Naive thymus-derived CD4-positive, alpha-beta T cell (primary cell): ENCODE measurements at regions of chr7 and their contacts with region 1.

Region 1: DNA sequence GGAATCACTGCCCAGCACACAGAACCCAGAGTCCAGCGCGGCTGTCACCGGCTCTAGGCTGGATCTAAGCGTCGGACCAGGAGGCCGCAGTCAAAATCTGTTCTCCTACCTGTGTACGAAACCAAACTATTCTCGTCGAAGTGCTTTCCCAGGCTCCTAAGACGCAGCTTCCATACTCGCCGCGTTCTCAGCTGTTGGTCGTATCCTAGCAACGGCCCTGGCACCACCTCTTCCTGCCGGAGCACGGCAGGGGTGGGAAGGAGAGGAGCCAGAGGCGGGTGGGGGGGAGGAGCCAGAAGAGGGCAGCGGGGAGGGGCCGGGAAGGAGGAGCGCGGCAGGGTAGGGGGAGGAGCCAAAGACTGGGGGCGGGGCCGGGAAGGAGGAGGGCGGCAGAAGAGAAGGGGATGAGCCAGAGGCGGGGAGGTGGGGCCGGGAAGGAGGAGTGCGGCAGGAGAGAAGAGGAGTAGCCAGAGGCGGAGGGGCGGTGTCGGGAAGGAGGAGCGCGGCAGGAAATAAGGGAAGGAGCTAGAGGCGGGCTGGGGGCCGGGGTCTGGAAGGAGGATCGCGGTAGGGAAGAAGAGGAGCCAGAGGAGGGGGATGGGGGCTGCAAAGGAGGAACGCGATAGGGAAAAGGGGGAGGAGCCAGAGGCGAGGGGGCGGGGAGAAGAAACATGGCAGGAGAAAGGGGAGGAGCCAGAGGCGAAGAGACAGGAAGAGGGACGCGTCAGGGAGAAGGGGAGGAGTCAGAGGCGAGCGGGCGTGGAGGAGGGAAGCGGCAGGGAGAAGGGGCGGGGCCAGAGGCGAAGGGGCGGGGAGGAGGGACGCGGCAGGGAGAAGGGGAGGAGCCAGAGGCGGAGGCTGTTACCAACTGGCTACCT is at the start of gene IQUB:
- DNase-seq: peak; percentile 82 to 94 (median 88)
- ATAC-seq: peak; percentile 95
- H3K4me3 ChIP-seq: peak within 1 kb of the TSS; percentile 54
- H3K4me3 Mint-ChIP-seq: peak within 1 kb of the TSS; percentile 87 to 97 (median 91)
- H3K27ac ChIP-seq: peak within 1 kb of the TSS; percentile 73
- H3K27ac Mint-ChIP-seq: peak within 1 kb of the TSS; percentile 74 to 96 (median 86)
- H3K4me1 ChIP-seq: peaks cover 4 to 14% of the 10 kb centered on the region in 2 donors
- H3K4me1 Mint-ChIP-seq: peaks cover 7 to 31% (median 27%) of the 10 kb centered on the region in 7 donors
- H3K27me3 ChIP-seq: no peaks in the 10 kb centered on the region
- H3K27me3 Mint-ChIP-seq: peaks cover 14 to 32% (median 23%) of the 10 kb centered on the region in 5 donors
- total RNA-seq, gene IQUB: 0.24 TPM in 1 of 5 experiments, not detected in the others

Region 2: GRCh38 chr7:123557398-123558288 is 23.0 kb after region 1 on chr7 and contains the start of gene NDUFA5:
- CTCF ChIA-PET with region 1: interaction called, 3 read pairs
- POLR2A ChIA-PET with region 1: interaction called, 21 read pairs
- intact Hi-C with region 1: loop called (anchors 1 kb)
- DNase-seq: peak; percentile 78 to 99 (median 98)
- ATAC-seq: peak; percentile 100
- H3K4me3 ChIP-seq: peak within 1 kb of the TSS; percentile 95
- H3K4me3 Mint-ChIP-seq: no peak within 1 kb of the TSS
- H3K27ac ChIP-seq: peak within 1 kb of the TSS; percentile 90
- H3K27ac Mint-ChIP-seq: no peak within 1 kb of the TSS
- H3K4me1 ChIP-seq: peaks cover 13 to 15% of the 10 kb centered on the region in 2 donors
- H3K4me1 Mint-ChIP-seq: peaks cover 3 to 16% (median 12%) of the 10 kb centered on the region in 7 donors
- H3K27me3 ChIP-seq: no peaks in the 10 kb centered on the region
- H3K27me3 Mint-ChIP-seq: peaks cover 0 to 6% (median 5%) of the 10 kb centered on the region in 5 donors
- total RNA-seq, gene NDUFA5: 51.2 to 64.1 (median 62.5) TPM

Region 3: GRCh38 chr7:124929467-124930172 is 1395.0 kb after region 1 on chr7 and contains the start of gene POT1:
- CTCF ChIA-PET with region 1: interaction called, 3 read pairs
- POLR2A ChIA-PET with region 1: no interaction called
- intact Hi-C with region 1: loop called (anchors 2 to 10 kb)
- DNase-seq: peak; percentile 88 to 94 (median 92)
- ATAC-seq: peak; percentile 99
- H3K4me3 ChIP-seq: peak within 1 kb of the TSS; percentile 68
- H3K4me3 Mint-ChIP-seq: peak within 1 kb of the TSS; percentile 92 to 99 (median 94)
- H3K27ac ChIP-seq: peak within 1 kb of the TSS; percentile 83
- H3K27ac Mint-ChIP-seq: peak within 1 kb of the TSS; percentile 92 to 98 (median 98)
- H3K4me1 ChIP-seq: peaks cover 9 to 10% of the 10 kb centered on the region in 2 donors
- H3K4me1 Mint-ChIP-seq: peaks cover 27 to 58% (median 51%) of the 10 kb centered on the region in 7 donors
- H3K27me3 ChIP-seq: no peaks in the 10 kb centered on the region
- H3K27me3 Mint-ChIP-seq: peaks cover 0 to 10% (median 0%) of the 10 kb centered on the region in 5 donors
- total RNA-seq, gene POT1: 13.1 to 33.8 (median 28.6) TPM